ENCODE measurements at regions of chr7 and their contacts with region 1.

Region 1: GRCh38 chr7:74525880-74526279 is 72.2 kb downstream of the GTF2IRD1 start:
- DNase-seq: peak; percentile 93
- H3K4me3 ChIP-seq: no peak overlapping the region
- H3K27ac ChIP-seq: no peak overlapping the region
- H3K4me1 ChIP-seq: peaks cover 17% of the 10 kb centered on the region
- H3K27me3 ChIP-seq: no peaks in the 10 kb centered on the region
- CTCF ChIP-seq: no peak

Region 2: GRCh38 chr7:74479961-74480829 is 45.7 kb before region 1 on chr7:
- CTCF ChIA-PET with region 1: no interaction called
- dilution Hi-C with region 1: loop called (anchors 5 kb)
- in situ Hi-C with region 1: no loop called
- intact Hi-C with region 1: loop called (anchors 5 kb)
- DNase-seq: peak; percentile 73
- H3K4me3 ChIP-seq: no peak overlapping the region
- H3K27ac ChIP-seq: no peak overlapping the region
- H3K4me1 ChIP-seq: peaks cover 81% of the 10 kb centered on the region
- H3K27me3 ChIP-seq: no peaks in the 10 kb centered on the region
- CTCF ChIP-seq: no peak

Region 3: GRCh38 chr7:74489997-74490945 is 35.6 kb before region 1 on chr7:
- CTCF ChIA-PET with region 1: no interaction called
- dilution Hi-C with region 1: loop called (anchors 5 kb)
- in situ Hi-C with region 1: no loop called
- intact Hi-C with region 1: no loop called
- DNase-seq: no peak
- H3K4me3 ChIP-seq: no peak overlapping the region
- H3K27ac ChIP-seq: no peak overlapping the region
- H3K4me1 ChIP-seq: no peaks in the 10 kb centered on the region
- H3K27me3 ChIP-seq: no peaks in the 10 kb centered on the region
- CTCF ChIP-seq: no peak

Region 4: DNA sequence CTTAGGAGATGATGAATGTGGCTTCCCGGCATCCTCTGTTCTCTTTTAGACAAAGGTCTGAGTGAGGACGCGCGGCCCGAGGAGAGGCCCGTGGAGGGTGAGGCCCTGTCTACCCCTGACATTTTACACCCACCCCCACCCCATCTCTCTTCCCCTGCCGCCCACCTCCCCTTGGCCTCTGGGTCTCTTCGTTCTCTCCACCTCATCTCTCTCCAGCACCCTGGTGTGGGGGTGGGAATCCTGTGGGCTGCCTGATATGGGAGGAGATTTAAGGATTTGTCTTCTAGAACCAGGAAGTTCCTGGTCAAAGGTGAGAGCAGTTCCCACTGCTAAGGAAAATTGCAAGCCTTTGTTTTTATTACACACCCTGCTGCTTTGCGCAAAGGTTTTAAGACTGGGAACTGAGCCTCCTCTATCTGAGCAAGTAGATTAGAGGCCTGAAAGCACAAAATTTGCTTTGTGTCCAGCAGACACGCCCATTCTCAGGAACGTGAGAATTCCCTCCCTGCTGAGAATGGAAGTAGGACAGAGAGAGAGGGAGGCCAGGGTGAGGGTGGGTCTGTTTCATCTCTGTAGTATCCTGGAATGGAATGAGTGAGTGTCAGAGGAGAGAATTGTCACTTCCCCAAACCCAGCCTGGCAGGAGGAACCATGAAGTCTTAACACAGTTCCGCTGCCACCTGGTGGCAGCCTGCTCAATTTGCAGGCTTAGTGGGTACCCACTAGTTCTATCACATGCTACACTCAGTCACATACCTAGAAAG is 19.0 kb after region 1 on chr7:
- CTCF ChIA-PET with region 1: no interaction called
- dilution Hi-C with region 1: no loop called
- in situ Hi-C with region 1: no loop called
- intact Hi-C with region 1: loop called (anchors 2 kb)
- DNase-seq: peak; percentile 23
- H3K4me3 ChIP-seq: no peak overlapping the region
- H3K27ac ChIP-seq: no peak overlapping the region
- H3K4me1 ChIP-seq: peaks cover 9% of the 10 kb centered on the region
- H3K27me3 ChIP-seq: no peaks in the 10 kb centered on the region
- CTCF ChIP-seq: peak; percentile 53 to 54

Measured in mammary epithelial cell (primary cell).